Tibial artery (tissue), 4 donors: ENCODE measurements at regions of chr14 and their contacts with region 1.

Region 1: DNA sequence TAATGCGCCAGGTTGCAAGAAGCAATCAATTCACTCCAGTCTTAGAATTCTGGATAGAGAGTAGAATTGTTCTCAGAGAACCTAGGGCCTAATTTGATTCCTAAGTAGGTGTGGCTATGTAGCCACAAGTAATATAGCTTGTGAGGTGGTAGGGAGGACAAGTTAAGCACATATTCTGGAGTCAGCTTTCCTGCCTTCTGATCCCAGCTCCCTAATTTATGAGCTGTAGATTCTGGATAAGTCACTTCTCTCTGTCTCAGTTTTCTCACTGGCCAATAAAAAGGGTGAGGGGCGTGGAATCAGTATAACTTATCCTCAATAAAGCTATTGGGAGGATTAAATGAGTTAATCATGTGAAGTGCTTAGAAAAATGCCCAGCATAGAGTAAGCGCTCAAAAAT is 3.0 kb upstream of the SNW1 start:
- DNase-seq: no peak
- H3K4me3 ChIP-seq: no peak overlapping the region
- H3K27ac ChIP-seq: no peak overlapping the region
- H3K4me1 ChIP-seq: peaks cover 0 to 20% (median 12%) of the 10 kb centered on the region in 4 donors
- H3K27me3 ChIP-seq: no peaks in the 10 kb centered on the region
- CTCF ChIP-seq: no peak

Region 2: GRCh38 chr14:77799863-77800730 is 36.1 kb after region 1 on chr14 and contains the start of gene ADCK1:
- intact Hi-C with region 1: loop called (anchors 2 kb)
- DNase-seq: peak; percentile 91 to 95
- H3K4me3 ChIP-seq: peak within 1 kb of the TSS; percentile 85 to 89
- H3K27ac ChIP-seq: peak within 1 kb of the TSS; percentile 86 to 87
- H3K4me1 ChIP-seq: peaks cover 0 to 11% (median 3%) of the 10 kb centered on the region in 4 donors
- H3K27me3 ChIP-seq: no peaks in the 10 kb centered on the region
- CTCF ChIP-seq: peak; percentile 50 to 51